ENCODE measurements at regions of chr4 and their contacts with region 1.

Region 1: GRCh38 chr4:87679449-87680169 is 29.5 kb downstream of the DMP1 start:
- DNase-seq: peak; percentile 44 to 65
- H3K4me3 ChIP-seq: no peak overlapping the region
- H3K4me1 ChIP-seq: no peaks in the 10 kb centered on the region
- H3K27me3 ChIP-seq: no peaks in the 10 kb centered on the region

Region 2: GRCh38 chr4:87838890-87839591 is 159.4 kb after region 1 on chr4:
- in situ Hi-C with region 1: loop called (anchors 5 kb)
- DNase-seq: peak; percentile 44 to 62
- H3K4me3 ChIP-seq: no peak overlapping the region
- H3K4me1 ChIP-seq: peaks cover 2% of the 10 kb centered on the region; the same call in 1 of the 2 replicates
- H3K27me3 ChIP-seq: peaks cover 41% of the 10 kb centered on the region